ENCODE measurements at regions of chrX and their contacts with region 1.

Region 1: DNA sequence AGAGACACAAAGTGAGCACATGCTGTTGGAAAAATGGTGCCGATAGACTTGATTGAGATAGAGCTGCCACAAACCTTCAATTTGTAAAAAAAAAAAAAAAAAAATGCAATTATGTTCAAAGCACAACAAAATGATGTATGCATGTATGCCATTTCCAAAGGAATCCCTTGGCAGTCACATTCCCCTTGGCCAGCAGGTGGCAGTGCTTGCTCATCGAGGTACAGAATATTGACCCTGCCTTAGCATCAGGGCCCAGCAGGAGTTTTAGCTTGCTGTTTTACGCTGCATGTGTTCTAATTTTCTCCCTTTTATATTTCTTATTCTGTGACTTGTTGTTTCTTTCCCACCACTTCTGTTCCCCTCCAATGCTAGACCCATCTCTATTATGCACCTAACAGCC is 34.5 kb upstream of the CYBB start:
- DNase-seq: peak; percentile 61
- ATAC-seq: peak; percentile 64
- H3K4me3 Mint-ChIP-seq: peak overlapping the region; percentile 33
- H3K27ac Mint-ChIP-seq: peak overlapping the region; percentile 92
- H3K4me1 Mint-ChIP-seq: peaks cover 26% of the 10 kb centered on the region
- H3K27me3 Mint-ChIP-seq: no peaks in the 10 kb centered on the region
- CTCF ChIP-seq: no peak

Region 2: GRCh38 chrX:37776283-37776986 is 31.1 kb after region 1 on chrX:
- CTCF ChIA-PET with region 1: interaction called, 35 read pairs
- POLR2A ChIA-PET with region 1: interaction called, 43 read pairs
- intact Hi-C with region 1: no loop called
- DNase-seq: no peak
- ATAC-seq: peak; percentile 73
- H3K4me3 Mint-ChIP-seq: peak overlapping the region; percentile 50
- H3K27ac Mint-ChIP-seq: peak overlapping the region; percentile 87
- H3K4me1 Mint-ChIP-seq: peaks cover 33% of the 10 kb centered on the region
- H3K27me3 Mint-ChIP-seq: no peaks in the 10 kb centered on the region
- CTCF ChIP-seq: no peak

Region 3: DNA sequence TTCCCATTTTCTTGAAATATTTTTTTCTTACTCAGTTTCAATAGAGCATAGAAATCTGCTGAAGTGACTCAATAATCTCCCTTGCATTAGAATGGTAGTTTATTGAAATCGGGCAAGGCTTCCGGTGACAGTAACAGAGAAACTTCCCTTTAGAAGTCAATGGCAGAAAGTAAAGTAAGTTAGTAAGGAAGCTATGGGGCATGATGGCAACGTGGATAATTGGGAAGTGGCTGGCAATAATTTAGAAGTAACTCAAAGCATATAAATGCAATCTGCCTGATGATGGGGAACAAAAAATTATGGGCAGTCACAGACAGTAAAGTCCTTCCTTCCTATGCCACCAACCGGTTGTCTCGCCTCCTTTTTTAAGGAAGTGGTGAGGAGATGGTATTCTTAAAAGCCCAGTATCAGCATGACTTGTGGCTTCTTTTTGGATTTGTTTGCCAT is 42.1 kb after region 1 on chrX:
- CTCF ChIA-PET with region 1: interaction called, 21 read pairs
- POLR2A ChIA-PET with region 1: interaction called, 80 read pairs
- intact Hi-C with region 1: loop called (anchors 1 kb)
- DNase-seq: no peak
- ATAC-seq: peak; percentile 71
- H3K4me3 Mint-ChIP-seq: peak overlapping the region; percentile 77
- H3K27ac Mint-ChIP-seq: peak overlapping the region; percentile 97
- H3K4me1 Mint-ChIP-seq: peaks cover 79% of the 10 kb centered on the region
- H3K27me3 Mint-ChIP-seq: no peaks in the 10 kb centered on the region
- CTCF ChIP-seq: no peak

Region 4: DNA sequence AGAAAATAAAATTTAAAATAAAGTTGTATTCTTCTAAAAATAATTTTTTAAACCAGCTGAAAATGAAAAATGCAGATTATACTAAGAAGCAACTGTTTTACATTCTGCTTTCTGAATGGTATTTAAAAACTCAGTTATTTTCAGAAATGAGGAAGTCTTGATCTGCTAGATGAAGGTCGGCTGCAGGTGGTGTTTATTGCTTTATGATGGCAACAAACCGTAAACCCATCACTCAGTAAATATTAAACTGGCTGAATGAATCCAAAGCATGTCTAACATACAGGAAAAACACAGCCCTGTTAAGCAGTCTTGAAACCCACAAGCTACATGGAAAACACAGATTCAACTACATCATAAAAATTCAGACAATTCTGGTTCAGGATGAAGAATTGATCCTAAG is 72.7 kb after region 1 on chrX:
- CTCF ChIA-PET with region 1: interaction called, 208 read pairs
- POLR2A ChIA-PET with region 1: interaction called, 83 read pairs
- intact Hi-C with region 1: loop called (anchors 2 kb)
- DNase-seq: no peak
- ATAC-seq: peak; percentile 48
- H3K4me3 Mint-ChIP-seq: peak overlapping the region; percentile 78
- H3K27ac Mint-ChIP-seq: peak overlapping the region; percentile 93
- H3K4me1 Mint-ChIP-seq: peaks cover 81% of the 10 kb centered on the region
- H3K27me3 Mint-ChIP-seq: no peaks in the 10 kb centered on the region
- CTCF ChIP-seq: no peak

Region 5: GRCh38 chrX:37926700-37927099 is 181.3 kb after region 1 on chrX:
- CTCF ChIA-PET with region 1: no interaction called
- POLR2A ChIA-PET with region 1: no interaction called
- intact Hi-C with region 1: no loop called
- DNase-seq: no peak
- ATAC-seq: no peak
- H3K4me3 Mint-ChIP-seq: no peak overlapping the region
- H3K27ac Mint-ChIP-seq: no peak overlapping the region
- H3K4me1 Mint-ChIP-seq: no peaks in the 10 kb centered on the region
- H3K27me3 Mint-ChIP-seq: peaks cover 4% of the 10 kb centered on the region
- CTCF ChIP-seq: no peak

Region 6: DNA sequence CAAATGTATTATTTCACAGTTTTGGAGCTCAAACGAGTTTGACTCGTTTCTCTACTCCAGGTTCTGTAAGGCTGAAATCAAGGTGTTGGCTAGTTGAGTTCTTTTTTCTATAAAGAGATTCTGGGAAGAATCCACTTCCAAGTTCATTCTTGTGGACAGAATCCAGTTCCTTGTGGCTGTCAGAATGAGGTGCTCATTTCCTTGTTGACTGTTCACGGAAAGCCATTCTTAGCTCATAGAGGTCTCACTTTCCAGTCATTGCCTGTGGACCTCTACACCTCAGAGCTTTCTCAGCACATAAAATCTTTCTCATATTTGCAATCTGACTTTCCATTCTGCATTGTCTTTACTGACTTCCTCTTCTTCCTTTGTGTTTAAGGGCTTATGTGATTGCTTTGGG is 323.9 kb after region 1 on chrX:
- CTCF ChIA-PET with region 1: no interaction called
- POLR2A ChIA-PET with region 1: no interaction called
- intact Hi-C with region 1: no loop called
- DNase-seq: no peak
- ATAC-seq: no peak
- H3K4me3 Mint-ChIP-seq: no peak overlapping the region
- H3K27ac Mint-ChIP-seq: no peak overlapping the region
- H3K4me1 Mint-ChIP-seq: no peaks in the 10 kb centered on the region
- H3K27me3 Mint-ChIP-seq: no peaks in the 10 kb centered on the region
- CTCF ChIP-seq: no peak

Region 7: DNA sequence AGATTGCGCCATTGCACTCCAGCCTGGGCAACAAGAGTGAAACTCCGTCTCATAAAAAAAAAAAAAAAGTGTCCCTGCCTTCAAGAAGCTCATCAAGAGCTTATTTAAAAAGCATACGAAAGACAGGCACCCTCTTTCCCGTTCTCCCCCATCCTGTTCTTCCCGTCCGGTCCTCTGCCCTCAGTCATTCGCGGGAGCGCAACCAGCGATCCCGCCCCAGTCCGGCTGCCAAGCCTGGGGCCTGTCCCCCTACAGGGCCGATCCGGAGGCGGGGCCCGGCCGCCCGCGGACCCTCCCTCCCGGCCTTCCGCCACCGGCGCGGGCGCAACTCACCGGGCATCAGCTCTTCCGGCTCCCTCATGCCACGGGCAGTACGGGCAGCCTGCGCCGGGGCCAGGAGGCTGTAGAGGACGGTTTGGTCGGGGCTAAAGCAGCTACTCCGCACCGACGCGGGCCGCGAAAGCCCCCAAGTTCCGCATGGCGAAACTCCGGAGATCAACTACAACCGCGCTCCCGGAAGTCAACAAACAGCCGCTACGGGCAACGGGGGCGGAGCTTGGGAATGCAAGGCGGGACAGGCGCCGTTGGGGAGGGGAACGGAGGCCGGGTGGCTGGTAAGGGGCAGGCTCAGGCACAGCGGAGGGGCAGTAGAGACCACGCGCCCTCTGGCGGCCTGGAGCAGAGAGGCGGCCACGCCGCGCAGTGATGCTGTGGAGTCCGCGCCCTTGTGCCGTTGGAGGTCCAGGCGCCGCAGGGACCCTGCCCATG is 581.8 kb after region 1 on chrX and contains the start of gene RPGR:
- CTCF ChIA-PET with region 1: interaction called, 4 read pairs
- POLR2A ChIA-PET with region 1: no interaction called
- intact Hi-C with region 1: loop called (anchors 5 kb)
- DNase-seq: peak; percentile 83
- ATAC-seq: peak; percentile 96
- H3K4me3 Mint-ChIP-seq: peak within 1 kb of the TSS; percentile 93
- H3K27ac Mint-ChIP-seq: peak within 1 kb of the TSS; percentile 98
- H3K4me1 Mint-ChIP-seq: peaks cover 17% of the 10 kb centered on the region
- H3K27me3 Mint-ChIP-seq: no peaks in the 10 kb centered on the region
- CTCF ChIP-seq: no peak
- total RNA-seq, gene RPGR: 12.4 and 13.1 TPM in 2 replicates